ENCODE measurements at regions of chr13 and their contacts with region 1.

Region 1: DNA sequence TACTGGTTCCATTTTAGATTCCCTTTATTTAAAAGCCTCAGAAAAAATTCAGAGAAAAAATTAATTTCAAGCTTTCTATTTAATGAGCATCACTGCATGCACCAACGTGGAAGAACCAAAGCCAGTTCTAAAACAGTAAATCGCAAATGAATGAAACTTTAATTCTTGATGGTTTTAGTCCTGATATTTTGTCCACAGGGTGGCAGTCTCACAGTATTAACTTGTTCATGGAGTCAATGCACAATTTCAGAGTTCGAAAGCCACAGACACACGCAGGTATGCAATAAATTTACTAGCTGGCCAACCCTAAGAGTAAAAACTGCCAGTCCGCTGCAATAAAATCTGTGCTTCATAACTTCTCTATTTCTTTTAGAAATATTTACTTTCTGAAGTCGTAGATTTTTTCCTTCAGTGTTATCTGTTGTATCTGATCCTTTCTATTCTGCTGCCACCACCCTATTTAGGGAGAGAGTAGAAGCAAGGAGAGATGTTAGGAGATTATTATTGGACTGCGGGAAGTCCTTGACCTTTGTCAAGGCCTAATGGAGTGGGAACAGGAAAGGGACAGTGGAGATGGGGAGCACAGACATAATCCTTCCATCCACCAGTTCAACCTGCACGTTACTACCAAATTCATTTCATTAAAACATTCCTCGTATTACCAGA is 7.0 kb upstream of the WBP4 start:
- DNase-seq: no peak
- H3K4me3 ChIP-seq: peak overlapping the region in 1 of 2 donors; percentile 2
- H3K27ac ChIP-seq: peak overlapping the region; percentile 76
- H3K4me1 ChIP-seq: peaks cover 81% of the 10 kb centered on the region
- H3K27me3 ChIP-seq: no peaks in the 10 kb centered on the region
- CTCF ChIP-seq: peak in 2 of 3 experiments; percentile 37 to 53
- POLR2A ChIP-seq: no peak

Region 2: DNA sequence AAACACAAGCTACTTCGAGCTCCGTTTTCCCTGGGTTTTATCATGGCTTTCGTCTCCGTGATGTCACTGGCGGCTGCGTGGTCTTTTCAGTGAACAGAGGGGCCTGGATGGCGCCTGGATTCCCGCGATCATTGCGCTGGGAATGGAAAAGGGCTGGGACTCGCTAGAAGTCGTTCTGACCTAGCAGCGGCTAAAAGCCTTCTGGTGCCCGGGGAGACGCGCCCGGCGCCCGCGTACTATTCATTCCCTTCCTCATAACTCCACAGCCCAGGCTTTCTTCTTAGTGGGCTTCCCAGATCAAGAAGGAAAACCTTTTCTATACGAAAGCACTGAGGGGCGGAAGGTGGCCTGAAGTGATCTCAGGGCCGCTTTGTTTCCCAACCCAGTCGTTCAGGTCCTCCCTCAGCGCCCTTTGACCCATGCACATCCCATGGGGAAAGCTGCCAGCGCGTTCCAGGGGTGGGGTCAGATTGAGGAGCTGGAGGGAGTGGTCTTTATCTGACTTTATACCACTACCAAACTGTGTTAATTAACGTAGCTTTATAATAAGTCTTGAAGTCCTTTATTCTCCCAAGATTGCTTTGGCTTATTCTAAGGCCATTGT is 131.8 kb before region 1 on chr13:
- intact Hi-C with region 1: loop called (anchors 10 kb)
- DNase-seq: no peak
- H3K4me3 ChIP-seq: no peak overlapping the region
- H3K27ac ChIP-seq: no peak overlapping the region
- H3K4me1 ChIP-seq: peaks cover 13% of the 10 kb centered on the region
- H3K27me3 ChIP-seq: no peaks in the 10 kb centered on the region
- CTCF ChIP-seq: no peak
- POLR2A ChIP-seq: no peak